Activated CD4-positive, alpha-beta T cell treated with anti-CD3 and anti-CD28 coated beads, Interleukin-2, amount 10 ng/mL, durations not matched to agents 24 days and 14 days (primary cell): ENCODE measurements at regions of chr16 and their contacts with region 1.

Region 1: DNA sequence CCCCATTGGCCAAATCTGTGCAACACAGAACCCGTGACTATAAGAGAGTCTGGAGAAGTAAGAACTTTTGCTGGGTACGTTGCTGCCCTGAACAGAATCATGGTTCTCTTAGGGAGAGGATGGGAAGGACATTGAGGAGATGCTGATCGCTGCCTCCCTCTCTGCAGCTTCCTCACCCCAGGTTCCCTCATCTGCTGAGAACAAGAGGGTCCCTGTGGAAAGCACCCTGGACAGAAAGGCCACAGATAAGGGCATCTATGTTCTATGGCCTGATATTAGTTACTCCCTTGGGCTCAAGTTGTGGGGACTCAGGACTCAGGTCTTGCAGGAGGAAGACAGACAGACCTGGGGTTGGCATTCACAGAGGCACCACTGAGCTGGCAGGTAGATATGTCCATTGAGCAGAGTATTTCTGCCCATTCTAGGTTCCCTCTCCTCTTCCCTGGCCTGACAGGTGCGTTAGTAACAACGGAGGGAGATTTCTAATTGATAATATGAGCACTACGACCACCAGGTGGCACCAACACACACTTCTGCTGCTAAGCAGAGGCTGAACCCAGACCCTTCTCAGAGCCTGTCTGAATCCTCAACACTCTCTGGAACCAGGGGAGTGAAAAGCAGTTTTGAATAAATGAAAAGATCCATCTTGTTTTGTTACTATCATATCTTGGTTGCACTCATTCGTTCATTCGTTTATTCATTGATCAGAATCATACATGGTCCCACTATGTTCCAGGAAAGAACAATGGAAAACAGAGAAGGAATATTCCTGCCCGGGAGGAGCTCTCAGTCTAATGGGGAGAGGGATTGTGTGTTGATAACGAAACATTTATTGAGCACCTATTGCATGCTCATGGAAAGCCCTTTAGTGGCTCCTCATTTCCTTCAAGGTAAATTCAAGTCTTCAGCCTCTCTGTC is 56.4 kb downstream of the SLC6A2 start:
- DNase-seq: peak; percentile 86
- H3K4me3 Mint-ChIP-seq: no peak overlapping the region
- H3K27ac Mint-ChIP-seq: no peak overlapping the region
- H3K4me1 Mint-ChIP-seq: no peaks in the 10 kb centered on the region
- H3K27me3 Mint-ChIP-seq: peaks cover 8% of the 10 kb centered on the region

Region 2: DNA sequence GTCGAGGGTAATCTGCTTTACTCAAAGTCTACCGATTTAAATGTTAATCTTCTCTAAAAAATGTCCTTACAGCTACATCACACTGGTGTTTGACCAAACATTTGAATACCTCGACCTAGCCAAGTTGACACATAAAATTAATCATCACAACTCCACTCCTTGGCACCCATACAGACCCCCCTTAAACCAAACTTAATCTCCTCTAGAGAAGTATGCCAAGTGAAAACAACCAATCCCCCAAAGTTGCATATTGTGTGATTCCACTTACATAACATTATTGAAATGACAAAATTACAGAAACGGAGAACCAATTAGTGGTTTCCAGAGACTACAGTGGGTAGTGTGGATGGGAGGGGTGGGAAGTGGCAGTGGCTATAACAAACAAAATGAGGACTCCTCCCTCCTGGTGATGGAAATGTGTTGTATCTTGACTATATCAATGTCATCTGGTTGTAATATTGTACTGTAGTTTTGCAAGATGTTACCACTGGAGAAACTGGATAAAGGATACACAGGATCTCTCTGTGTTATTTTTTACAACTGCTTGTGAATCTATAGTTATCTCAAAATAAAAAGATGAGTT is 106.4 kb before region 1 on chr16:
- intact Hi-C with region 1: no loop called
- DNase-seq: no peak
- H3K4me3 Mint-ChIP-seq: no peak overlapping the region
- H3K27ac Mint-ChIP-seq: no peak overlapping the region
- H3K4me1 Mint-ChIP-seq: no peaks in the 10 kb centered on the region
- H3K27me3 Mint-ChIP-seq: peaks cover 3% of the 10 kb centered on the region

Region 3: GRCh38 chr16:55809386-55809785 is 97.2 kb after region 1 on chr16:
- intact Hi-C with region 1: no loop called
- DNase-seq: no peak
- H3K4me3 Mint-ChIP-seq: no peak overlapping the region
- H3K27ac Mint-ChIP-seq: no peak overlapping the region
- H3K4me1 Mint-ChIP-seq: no peaks in the 10 kb centered on the region
- H3K27me3 Mint-ChIP-seq: no peaks in the 10 kb centered on the region

Region 4: DNA sequence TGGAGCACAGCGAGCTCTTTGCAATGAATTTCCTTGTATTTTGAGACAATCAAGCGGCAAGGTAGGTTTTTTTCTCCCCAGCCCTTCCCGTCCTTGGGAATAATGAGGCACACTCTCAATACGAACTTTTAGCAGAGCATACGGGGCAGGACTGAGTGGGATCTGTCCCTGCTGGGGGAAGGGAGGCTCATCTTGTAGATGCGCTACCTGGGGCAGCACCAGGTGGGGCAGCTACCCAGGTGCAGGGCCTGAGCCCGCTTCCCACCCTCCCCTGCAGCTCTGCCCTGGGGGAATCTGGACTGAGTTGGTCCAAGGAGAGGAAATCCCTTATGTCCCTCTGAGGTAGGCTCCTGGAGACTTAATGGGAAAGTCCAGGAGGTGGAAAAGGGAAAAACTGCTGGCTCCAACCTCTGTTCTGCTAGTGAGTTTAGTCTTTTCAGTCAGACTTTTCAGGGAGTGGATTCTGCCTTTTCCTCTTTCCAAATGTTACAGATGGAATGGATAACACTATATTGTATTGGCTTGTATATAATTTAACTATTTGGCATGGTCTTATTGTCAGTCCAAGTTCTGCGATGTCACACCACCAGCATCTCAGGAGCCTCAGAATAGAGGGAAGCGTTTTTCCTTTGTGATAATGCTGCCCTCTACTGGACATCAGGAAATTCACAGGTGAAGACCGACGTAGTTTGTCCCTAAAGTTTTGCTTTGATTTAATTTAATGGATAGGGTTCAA is 130.3 kb after region 1 on chr16:
- intact Hi-C with region 1: loop called (anchors 1 kb)
- DNase-seq: peak; percentile 75
- H3K4me3 Mint-ChIP-seq: no peak overlapping the region
- H3K27ac Mint-ChIP-seq: no peak overlapping the region
- H3K4me1 Mint-ChIP-seq: no peaks in the 10 kb centered on the region
- H3K27me3 Mint-ChIP-seq: peaks cover 8% of the 10 kb centered on the region

Region 5: DNA sequence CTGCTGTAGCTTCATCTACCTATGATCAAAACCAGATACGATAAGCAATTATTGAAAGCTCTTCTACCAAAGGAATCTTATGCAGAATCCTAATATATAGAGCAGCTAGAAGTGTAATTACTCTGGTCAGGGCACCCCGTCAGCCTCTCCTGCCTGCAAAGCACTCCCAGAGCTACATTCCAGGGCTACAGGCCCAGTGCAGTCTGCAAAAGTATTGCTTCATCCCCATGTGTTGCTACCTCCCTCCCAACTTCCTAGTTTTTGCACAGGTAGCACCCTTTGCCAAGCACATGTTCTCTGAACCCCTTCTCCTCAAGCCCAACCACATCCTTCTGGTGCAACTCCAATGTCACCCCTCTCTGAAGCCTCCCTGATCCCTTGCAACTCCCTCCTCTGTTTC is 155.9 kb after region 1 on chr16:
- intact Hi-C with region 1: no loop called
- DNase-seq: no peak
- H3K4me3 Mint-ChIP-seq: no peak overlapping the region
- H3K27ac Mint-ChIP-seq: no peak overlapping the region
- H3K4me1 Mint-ChIP-seq: no peaks in the 10 kb centered on the region
- H3K27me3 Mint-ChIP-seq: no peaks in the 10 kb centered on the region